ENCODE measurements at regions of chr7 and their contacts with region 1.

Region 1: DNA sequence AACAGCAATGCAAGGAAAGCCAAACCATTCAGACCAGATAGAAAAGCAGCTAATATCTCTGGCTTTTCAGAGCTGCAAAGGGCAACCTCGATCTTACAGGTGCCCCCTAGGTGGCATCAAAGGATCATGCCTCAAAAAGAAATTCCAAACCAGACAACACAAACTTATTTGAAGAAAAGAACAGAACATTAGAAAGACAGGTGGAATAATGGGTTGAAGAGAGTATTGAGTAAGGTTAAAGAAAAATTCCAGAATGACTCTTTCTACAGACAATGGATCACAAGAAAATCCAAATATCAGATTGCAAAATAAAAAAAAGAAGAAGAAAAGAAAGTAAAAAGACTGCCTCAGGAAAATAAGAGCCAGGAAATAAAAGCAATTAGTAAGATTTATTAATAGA is 213.7 kb downstream of the ELMO1 start:
- DNase-seq: peak in 6 of 14 experiments; percentile 5 to 61 (median 34)
- ATAC-seq: no peak
- H3K4me3 ChIP-seq: no peak overlapping the region
- H3K4me3 Mint-ChIP-seq: no peak overlapping the region
- H3K27ac ChIP-seq: no peak overlapping the region
- H3K27ac Mint-ChIP-seq: no peak overlapping the region
- H3K4me1 ChIP-seq: peaks cover 4% of the 10 kb centered on the region
- H3K4me1 Mint-ChIP-seq: peaks cover 33% of the 10 kb centered on the region
- H3K27me3 ChIP-seq: no peaks in the 10 kb centered on the region
- H3K27me3 Mint-ChIP-seq: no peaks in the 10 kb centered on the region
- CTCF ChIP-seq: peak; percentile 49

Region 2: GRCh38 chr7:37092548-37092947 is 142.4 kb before region 1 on chr7:
- CTCF ChIA-PET with region 1: no interaction called
- POLR2A ChIA-PET with region 1: no interaction called
- intact Hi-C with region 1: no loop called
- DNase-seq: peak in 3 of 14 experiments; percentile 18 to 65 (median 50)
- ATAC-seq: no peak
- H3K4me3 ChIP-seq: no peak overlapping the region
- H3K4me3 Mint-ChIP-seq: no peak overlapping the region
- H3K27ac ChIP-seq: no peak overlapping the region
- H3K27ac Mint-ChIP-seq: no peak overlapping the region
- H3K4me1 ChIP-seq: no peaks in the 10 kb centered on the region
- H3K4me1 Mint-ChIP-seq: peaks cover 9% of the 10 kb centered on the region
- H3K27me3 ChIP-seq: no peaks in the 10 kb centered on the region
- H3K27me3 Mint-ChIP-seq: no peaks in the 10 kb centered on the region
- CTCF ChIP-seq: no peak

Region 3: DNA sequence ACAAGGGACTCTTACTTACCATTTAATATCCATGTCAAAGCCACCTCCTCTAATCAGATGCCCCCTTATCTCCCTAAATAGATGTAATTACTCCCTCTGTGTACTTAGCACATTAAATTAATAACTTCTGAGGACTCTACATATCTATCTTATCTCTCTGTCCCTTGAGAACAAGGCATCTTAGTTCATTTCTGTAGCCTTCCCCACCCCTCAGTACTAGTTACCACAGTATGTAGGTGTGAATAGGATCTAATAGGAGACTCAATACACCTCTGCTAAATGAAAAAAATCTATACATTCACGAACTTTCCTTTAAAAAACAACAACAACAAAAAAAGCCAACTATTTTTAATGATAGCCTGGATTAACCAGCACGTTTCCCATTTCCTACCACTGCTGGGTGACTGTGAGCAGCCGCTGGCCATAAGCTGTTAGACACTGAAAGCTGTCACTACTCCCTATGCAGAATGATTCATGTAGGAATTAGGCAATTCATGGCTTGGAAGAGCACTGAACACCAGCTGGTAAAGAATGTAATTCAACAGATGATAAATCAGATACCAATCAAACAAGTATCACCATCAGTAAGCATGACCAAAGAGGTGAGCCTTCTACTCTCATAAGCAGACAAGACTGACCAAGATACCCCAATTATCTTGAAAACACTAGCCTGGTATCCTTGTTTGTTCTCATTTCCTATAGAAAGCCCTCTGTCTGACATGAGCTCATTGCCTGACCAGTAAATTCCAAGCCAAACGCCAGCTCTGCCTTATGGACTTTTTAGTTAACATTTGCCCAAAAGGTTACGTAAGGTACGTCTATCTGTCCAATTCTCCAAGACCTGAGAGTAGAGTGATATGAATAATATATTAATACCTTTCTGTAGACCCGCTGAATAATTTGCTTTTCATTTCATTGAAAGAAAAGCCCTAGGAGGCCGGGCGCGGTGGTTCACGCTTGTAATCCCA is 85.9 kb after region 1 on chr7:
- CTCF ChIA-PET with region 1: no interaction called
- POLR2A ChIA-PET with region 1: no interaction called
- intact Hi-C with region 1: no loop called
- DNase-seq: no peak
- ATAC-seq: no peak
- H3K4me3 ChIP-seq: no peak overlapping the region
- H3K4me3 Mint-ChIP-seq: no peak overlapping the region
- H3K27ac ChIP-seq: no peak overlapping the region
- H3K27ac Mint-ChIP-seq: no peak overlapping the region
- H3K4me1 ChIP-seq: peaks cover 14% of the 10 kb centered on the region
- H3K4me1 Mint-ChIP-seq: peaks cover 11% of the 10 kb centered on the region
- H3K27me3 ChIP-seq: no peaks in the 10 kb centered on the region
- H3K27me3 Mint-ChIP-seq: no peaks in the 10 kb centered on the region
- CTCF ChIP-seq: no peak

Region 4: DNA sequence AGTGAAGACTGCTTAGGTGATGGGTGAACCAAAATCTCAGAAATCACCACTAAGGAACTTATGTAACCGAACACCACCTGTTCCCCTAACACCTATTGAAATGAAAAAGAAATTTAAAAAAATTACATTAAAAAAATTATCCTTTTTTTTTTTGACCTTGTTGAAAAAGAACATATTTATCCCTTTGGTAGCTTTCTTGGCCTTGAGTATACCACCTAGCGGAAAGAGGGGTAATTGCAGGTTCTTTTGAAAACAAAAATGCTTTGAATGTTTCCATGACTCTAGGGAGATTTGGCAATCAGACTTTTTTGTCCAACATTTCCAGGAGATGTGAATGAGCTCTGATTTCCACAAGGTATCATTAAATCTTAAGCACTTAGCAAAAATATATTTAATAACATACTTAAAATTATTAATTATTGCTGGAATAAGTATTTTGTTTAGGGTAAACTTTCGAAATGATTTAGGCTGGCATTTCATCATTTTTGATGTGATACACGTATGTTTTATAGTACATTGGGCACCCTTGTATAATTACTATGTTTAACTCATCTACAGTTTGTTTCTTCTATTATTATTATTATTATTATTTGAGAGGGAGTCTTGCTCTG is 260.8 kb after region 1 on chr7:
- CTCF ChIA-PET with region 1: interaction called, 16 read pairs
- POLR2A ChIA-PET with region 1: no interaction called
- intact Hi-C with region 1: loop called in 1 of 2 experiments (anchors 2 kb)
- DNase-seq: peak in 3 of 14 experiments; percentile 47 to 59 (median 51)
- ATAC-seq: peak; percentile 68
- H3K4me3 ChIP-seq: no peak overlapping the region
- H3K4me3 Mint-ChIP-seq: no peak overlapping the region
- H3K27ac ChIP-seq: no peak overlapping the region
- H3K27ac Mint-ChIP-seq: no peak overlapping the region
- H3K4me1 ChIP-seq: no peaks in the 10 kb centered on the region
- H3K4me1 Mint-ChIP-seq: no peaks in the 10 kb centered on the region
- H3K27me3 ChIP-seq: no peaks in the 10 kb centered on the region
- H3K27me3 Mint-ChIP-seq: no peaks in the 10 kb centered on the region
- CTCF ChIP-seq: peak; percentile 89

Region 5: GRCh38 chr7:37510043-37510634 is 275.2 kb after region 1 on chr7:
- CTCF ChIA-PET with region 1: interaction called, 4 read pairs
- POLR2A ChIA-PET with region 1: no interaction called
- intact Hi-C with region 1: loop called in 1 of 2 experiments (anchors 1 kb)
- DNase-seq: peak in 7 of 14 experiments; percentile 3 to 61 (median 21)
- ATAC-seq: peak; percentile 71
- H3K4me3 ChIP-seq: no peak overlapping the region
- H3K4me3 Mint-ChIP-seq: no peak overlapping the region
- H3K27ac ChIP-seq: no peak overlapping the region
- H3K27ac Mint-ChIP-seq: no peak overlapping the region
- H3K4me1 ChIP-seq: no peaks in the 10 kb centered on the region
- H3K4me1 Mint-ChIP-seq: no peaks in the 10 kb centered on the region
- H3K27me3 ChIP-seq: peaks cover 0 to 4% of the 10 kb centered on the region in 2 experiments
- H3K27me3 Mint-ChIP-seq: peaks cover 25% of the 10 kb centered on the region
- CTCF ChIP-seq: peak; percentile 67

Region 6: GRCh38 chr7:37833107-37833817 is 598.3 kb after region 1 on chr7:
- CTCF ChIA-PET with region 1: no interaction called
- POLR2A ChIA-PET with region 1: no interaction called
- intact Hi-C with region 1: loop called (anchors 5 to 10 kb)
- DNase-seq: peak; percentile 7 to 72 (median 20)
- ATAC-seq: peak; percentile 56
- H3K4me3 ChIP-seq: peak overlapping the region; percentile 41
- H3K4me3 Mint-ChIP-seq: peak overlapping the region; percentile 85
- H3K27ac ChIP-seq: no peak overlapping the region
- H3K27ac Mint-ChIP-seq: no peak overlapping the region
- H3K4me1 ChIP-seq: peaks cover 6% of the 10 kb centered on the region
- H3K4me1 Mint-ChIP-seq: no peaks in the 10 kb centered on the region
- H3K27me3 ChIP-seq: no peaks in the 10 kb centered on the region
- H3K27me3 Mint-ChIP-seq: peaks cover 5% of the 10 kb centered on the region
- CTCF ChIP-seq: peak; percentile 83

Measured in CD4-positive, alpha-beta T cell (primary cell).